ENCODE measurements at regions of chr1 and their contacts with region 1.

Region 1: DNA sequence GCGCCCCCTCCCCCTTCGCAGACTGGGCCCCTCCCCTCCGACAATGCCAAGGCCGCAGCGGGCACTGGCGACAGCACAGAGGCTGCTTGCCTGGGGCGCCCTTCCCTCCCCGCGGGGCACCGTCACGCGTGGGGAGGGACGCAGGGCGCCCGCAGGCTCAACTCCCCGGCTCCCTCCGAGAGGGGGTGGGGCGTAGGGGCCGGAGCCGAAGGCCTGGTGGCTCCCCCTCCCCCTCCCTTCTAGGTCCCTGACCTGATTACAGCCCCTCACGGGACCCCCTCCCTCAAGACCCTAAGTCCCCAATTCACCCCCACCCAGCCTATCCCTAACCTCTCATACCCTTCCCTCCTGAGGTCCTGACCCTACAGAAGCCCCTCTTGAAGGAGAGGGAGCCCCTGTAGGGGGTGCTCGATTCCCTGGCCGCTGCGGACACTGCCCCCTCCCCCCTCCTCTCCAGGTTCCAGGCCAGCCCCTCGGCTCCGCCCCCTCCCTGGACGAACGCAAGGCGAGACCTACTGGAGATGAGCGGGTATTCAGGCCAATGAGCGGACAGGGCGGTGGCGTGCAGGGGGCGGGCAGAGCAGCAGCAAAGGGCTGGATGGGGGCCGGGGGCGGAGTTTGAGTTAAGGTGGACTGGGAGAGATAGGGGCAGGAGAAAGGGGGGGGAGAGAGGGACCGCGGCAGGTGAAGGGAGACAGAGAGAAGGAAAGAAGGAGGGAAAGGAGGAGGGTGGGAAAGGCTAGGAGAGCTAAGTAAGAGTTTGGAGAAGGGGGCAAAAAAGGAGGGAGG is 733 bp upstream of the ZBTB7B start:
- DNase-seq: peak; percentile 94 to 99 (median 96)
- H3K4me3 ChIP-seq: peak overlapping the region; percentile 67 to 98 (median 77)
- H3K4me3 Mint-ChIP-seq: peak overlapping the region; percentile 96 to 99
- H3K27ac ChIP-seq: peak overlapping the region; percentile 87 to 95
- H3K27ac Mint-ChIP-seq: peak overlapping the region; percentile 90 to 100 (median 96)
- H3K4me1 ChIP-seq: peaks cover 65 to 72% of the 10 kb centered on the region in 2 donors
- H3K4me1 Mint-ChIP-seq: peaks cover 56% of the 10 kb centered on the region
- H3K27me3 ChIP-seq: no peaks in the 10 kb centered on the region
- H3K27me3 Mint-ChIP-seq: peaks cover 0 to 4% (median 0%) of the 10 kb centered on the region in 3 donors
- CTCF ChIP-seq: no peak

Region 2: GRCh38 chr1:154961497-154962262 is 40.2 kb before region 1 on chr1 and contains the start of gene PYGO2:
- intact Hi-C with region 1: loop called (anchors 5 kb)
- DNase-seq: peak; percentile 64 to 68 (median 64)
- H3K4me3 ChIP-seq: peak within 1 kb of the TSS; percentile 73 to 95 (median 93)
- H3K4me3 Mint-ChIP-seq: peak within 1 kb of the TSS; percentile 81 to 91
- H3K27ac ChIP-seq: peak within 1 kb of the TSS; percentile 57 to 90
- H3K27ac Mint-ChIP-seq: peak within 1 kb of the TSS; percentile 78 to 92 (median 87)
- H3K4me1 ChIP-seq: peaks cover 19 to 34% of the 10 kb centered on the region in 2 donors
- H3K4me1 Mint-ChIP-seq: peaks cover 27% of the 10 kb centered on the region
- H3K27me3 ChIP-seq: no peaks in the 10 kb centered on the region
- H3K27me3 Mint-ChIP-seq: peaks cover 0 to 2% (median 0%) of the 10 kb centered on the region in 3 donors
- CTCF ChIP-seq: peak; percentile 85
- polyA plus RNA-seq, gene PYGO2: 8.2 to 12.5 (median 12.0) TPM

Region 3: GRCh38 chr1:154974063-154974807 is 27.6 kb before region 1 on chr1 and contains the start of gene CKS1B:
- intact Hi-C with region 1: loop called (anchors 2 to 5 kb)
- DNase-seq: peak; percentile 99 to 100 (median 100)
- H3K4me3 ChIP-seq: peak within 1 kb of the TSS; percentile 61 to 95 (median 92)
- H3K4me3 Mint-ChIP-seq: no peak within 1 kb of the TSS
- H3K27ac ChIP-seq: peak within 1 kb of the TSS; percentile 94 to 98
- H3K27ac Mint-ChIP-seq: no peak within 1 kb of the TSS
- H3K4me1 ChIP-seq: peaks cover 49 to 56% of the 10 kb centered on the region in 2 donors
- H3K4me1 Mint-ChIP-seq: peaks cover 42% of the 10 kb centered on the region
- H3K27me3 ChIP-seq: no peaks in the 10 kb centered on the region
- H3K27me3 Mint-ChIP-seq: peaks cover 0 to 3% (median 0%) of the 10 kb centered on the region in 3 donors
- CTCF ChIP-seq: no peak
- polyA plus RNA-seq, gene CKS1B: 9.4 to 22.6 (median 18.0) TPM

Region 4: GRCh38 chr1:155017041-155017945 is 15.4 kb after region 1 on chr1:
- intact Hi-C with region 1: loop called (anchors 2 kb)
- DNase-seq: peak; percentile 82 to 89 (median 87)
- H3K4me3 ChIP-seq: peak overlapping the region; percentile 2 to 68 (median 23)
- H3K4me3 Mint-ChIP-seq: peak overlapping the region; percentile 59 to 61
- H3K27ac ChIP-seq: peak overlapping the region; percentile 53 to 56
- H3K27ac Mint-ChIP-seq: peak overlapping the region; percentile 18 to 87 (median 60)
- H3K4me1 ChIP-seq: peaks cover 60 to 66% of the 10 kb centered on the region in 2 donors
- H3K4me1 Mint-ChIP-seq: peaks cover 68% of the 10 kb centered on the region
- H3K27me3 ChIP-seq: no peaks in the 10 kb centered on the region
- H3K27me3 Mint-ChIP-seq: peaks cover 0 to 5% (median 2%) of the 10 kb centered on the region in 3 donors
- CTCF ChIP-seq: peak; percentile 100

Region 5: GRCh38 chr1:155050560-155051341 is 48.9 kb after region 1 on chr1 and contains the start of gene ADAM15:
- intact Hi-C with region 1: loop called (anchors 5 kb)
- DNase-seq: peak; percentile 81 to 88 (median 85)
- H3K4me3 ChIP-seq: peak within 1 kb of the TSS; percentile 60 to 96 (median 84)
- H3K4me3 Mint-ChIP-seq: peak within 1 kb of the TSS; percentile 90 to 95
- H3K27ac ChIP-seq: peak within 1 kb of the TSS; percentile 54 to 79
- H3K27ac Mint-ChIP-seq: peak within 1 kb of the TSS; percentile 73 to 93 (median 89)
- H3K4me1 ChIP-seq: peaks cover 28 to 42% of the 10 kb centered on the region in 2 donors
- H3K4me1 Mint-ChIP-seq: peaks cover 26% of the 10 kb centered on the region
- H3K27me3 ChIP-seq: no peaks in the 10 kb centered on the region
- H3K27me3 Mint-ChIP-seq: peaks cover 0 to 5% (median 1%) of the 10 kb centered on the region in 3 donors
- CTCF ChIP-seq: peak; percentile 99
- polyA plus RNA-seq, gene ADAM15: 44.5 to 202 (median 74.3) TPM

Region 6: GRCh38 chr1:155063550-155064110 is 61.8 kb after region 1 on chr1 and contains the start of gene EFNA4:
- intact Hi-C with region 1: loop called in 1 of 2 experiments (anchors 5 kb)
- DNase-seq: peak; percentile 85 to 90 (median 87)
- H3K4me3 ChIP-seq: peak within 1 kb of the TSS; percentile 62 to 89 (median 77)
- H3K4me3 Mint-ChIP-seq: peak within 1 kb of the TSS; percentile 81 to 94
- H3K27ac ChIP-seq: peak within 1 kb of the TSS; percentile 36 to 72
- H3K27ac Mint-ChIP-seq: peak within 1 kb of the TSS; percentile 15 to 90 (median 82)
- H3K4me1 ChIP-seq: peaks cover 26 to 41% of the 10 kb centered on the region in 2 donors
- H3K4me1 Mint-ChIP-seq: peaks cover 33% of the 10 kb centered on the region
- H3K27me3 ChIP-seq: peaks cover 0 to 5% of the 10 kb centered on the region in 2 donors
- H3K27me3 Mint-ChIP-seq: peaks cover 6 to 10% (median 9%) of the 10 kb centered on the region in 3 donors
- CTCF ChIP-seq: no peak
- polyA plus RNA-seq, gene EFNA4: 2.3 to 8.0 (median 4.1) TPM